Heart right ventricle (tissue), 16 donors: ENCODE measurements at regions of chr19 and their contacts with region 1.

Region 1: GRCh38 chr19:51807111-51807701 is 12.2 kb downstream of the FPR3 start:
- DNase-seq: no peak
- ATAC-seq: peak in 2 of 8 donors; percentile 35
- H3K4me3 ChIP-seq: no peak overlapping the region
- H3K27ac ChIP-seq: peak overlapping the region in 1 of 10 donors; percentile 86
- H3K4me1 ChIP-seq: peaks cover 0 to 78% (median 22%) of the 10 kb centered on the region in 9 donors
- H3K27me3 ChIP-seq: no peaks in the 10 kb centered on the region
- CTCF ChIP-seq: no peak

Region 2: GRCh38 chr19:51688672-51689571 is 118.3 kb before region 1 on chr19:
- intact Hi-C with region 1: loop called in 1 of 10 experiments (anchors 10 kb)
- DNase-seq: peak; percentile 93 to 96
- ATAC-seq: peak; percentile 88 to 94 (median 89)
- H3K4me3 ChIP-seq: peak overlapping the region; percentile 63 to 100 (median 90)
- H3K27ac ChIP-seq: peak overlapping the region; percentile 93 to 100 (median 97)
- H3K4me1 ChIP-seq: peaks cover 8 to 51% (median 40%) of the 10 kb centered on the region in 9 donors
- H3K27me3 ChIP-seq: peaks cover 0 to 30% (median 0%) of the 10 kb centered on the region in 7 donors
- CTCF ChIP-seq: peak in 4 of 9 donors; percentile 10 to 31 (median 24)

Region 3: GRCh38 chr19:51703575-51704515 is 103.4 kb before region 1 on chr19:
- intact Hi-C with region 1: loop called in 2 of 10 experiments (anchors 5 to 10 kb)
- DNase-seq: peak; percentile 97
- ATAC-seq: peak; percentile 95 to 97 (median 96)
- H3K4me3 ChIP-seq: peak overlapping the region; percentile 23 to 78 (median 60)
- H3K27ac ChIP-seq: peak overlapping the region; percentile 56 to 97 (median 90)
- H3K4me1 ChIP-seq: peaks cover 0 to 37% (median 28%) of the 10 kb centered on the region in 9 donors
- H3K27me3 ChIP-seq: peaks cover 0 to 11% (median 0%) of the 10 kb centered on the region in 7 donors
- CTCF ChIP-seq: peak in 8 of 9 donors; percentile 10 to 77 (median 52)

Region 4: DNA sequence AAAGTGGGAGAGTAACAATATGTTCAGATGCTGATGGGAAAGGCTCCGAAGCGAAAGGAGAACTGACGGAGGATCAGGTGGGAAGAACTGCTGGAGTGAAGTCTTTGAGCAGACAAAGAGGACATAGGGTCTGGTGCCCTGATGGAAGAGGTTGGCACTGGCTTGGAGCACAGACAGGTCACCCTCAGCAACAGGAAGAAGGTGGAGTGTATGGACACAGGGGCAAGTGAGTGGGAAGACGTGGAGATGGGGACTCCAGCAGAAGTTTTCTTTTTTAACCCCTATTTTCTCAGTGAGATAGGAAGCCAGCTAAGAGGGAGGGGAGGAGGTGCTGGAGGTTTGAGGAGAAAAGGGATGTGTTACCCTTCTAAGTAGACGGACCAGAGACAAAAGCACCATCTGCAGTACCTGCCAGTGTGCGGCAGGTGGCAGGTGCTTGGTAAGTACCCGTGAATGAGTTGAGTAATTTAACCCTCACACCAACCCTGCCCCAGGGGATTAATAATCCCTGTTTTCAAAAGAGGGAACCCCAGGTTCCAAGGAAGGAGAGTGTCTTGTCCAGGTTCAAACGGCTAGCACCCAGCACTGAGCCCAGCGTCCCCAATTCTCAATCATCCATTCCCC is 94.6 kb before region 1 on chr19:
- intact Hi-C with region 1: loop called in 3 of 10 experiments (anchors 5 to 10 kb)
- DNase-seq: no peak
- ATAC-seq: peak in 1 of 8 donors; percentile 13
- H3K4me3 ChIP-seq: no peak overlapping the region
- H3K27ac ChIP-seq: no peak overlapping the region
- H3K4me1 ChIP-seq: no peaks in the 10 kb centered on the region
- H3K27me3 ChIP-seq: peaks cover 0 to 22% (median 5%) of the 10 kb centered on the region in 7 donors
- CTCF ChIP-seq: peak in 7 of 9 donors; percentile 14 to 43 (median 35)